ENCODE measurements at regions of chr6 and their contacts with region 1.

Region 1: DNA sequence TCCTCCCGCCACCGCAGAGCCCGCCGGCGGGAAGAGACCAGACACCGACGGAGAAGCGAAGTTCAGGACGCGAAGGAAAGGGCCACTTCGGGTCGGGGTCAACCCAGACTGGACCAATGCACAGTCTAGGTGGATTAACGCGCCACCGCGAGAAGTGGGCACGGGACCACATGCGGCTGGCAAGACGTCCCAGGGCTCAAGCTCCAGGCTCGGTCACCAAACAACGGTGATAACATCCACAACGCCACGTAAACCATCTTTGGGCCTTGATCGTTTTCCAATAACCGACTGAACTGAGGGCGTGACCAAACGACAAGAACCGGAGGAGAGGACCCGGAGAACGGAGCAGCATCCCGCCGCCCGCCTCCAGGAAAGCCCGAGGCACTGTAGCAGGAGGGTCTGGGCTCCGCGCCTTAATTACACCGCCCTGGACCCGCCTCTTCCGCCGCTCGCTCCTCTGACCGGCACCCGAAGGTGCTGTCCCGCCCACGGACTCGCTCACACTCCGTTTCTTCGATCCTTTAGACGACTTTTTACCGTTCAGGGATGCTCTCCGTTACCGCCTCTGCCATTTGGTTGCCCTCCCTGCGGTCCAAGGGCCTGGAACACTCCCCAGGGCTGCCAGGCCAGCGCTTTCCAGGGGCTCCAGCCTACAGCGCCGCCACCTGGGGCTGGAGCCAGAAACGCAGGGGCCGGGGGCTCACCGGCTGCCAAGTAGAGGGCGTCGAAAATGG is 44.1 kb downstream of the DPPA5 start:
- DNase-seq: peak; percentile 68
- ATAC-seq: peak; percentile 78
- H3K4me3 Mint-ChIP-seq: peak overlapping the region; percentile 95
- H3K27ac Mint-ChIP-seq: peak overlapping the region; percentile 93
- H3K4me1 Mint-ChIP-seq: peaks cover 24% of the 10 kb centered on the region
- H3K27me3 Mint-ChIP-seq: peaks cover 38% of the 10 kb centered on the region
- CTCF ChIP-seq: no peak

Region 2: GRCh38 chr6:73285674-73286283 is 24.2 kb before region 1 on chr6:
- CTCF ChIA-PET with region 1: interaction called, 48 read pairs
- POLR2A ChIA-PET with region 1: interaction called, 3 read pairs
- DNase-seq: no peak
- ATAC-seq: peak; percentile 84
- H3K4me3 Mint-ChIP-seq: no peak overlapping the region
- H3K27ac Mint-ChIP-seq: no peak overlapping the region
- H3K4me1 Mint-ChIP-seq: peaks cover 9% of the 10 kb centered on the region; the same call in 1 of the 2 replicates
- H3K27me3 Mint-ChIP-seq: no peaks in the 10 kb centered on the region
- CTCF ChIP-seq: no peak

Measured in WTC11 (cell line).